GM12878 (cell line): ENCODE measurements at regions of chr12 and their contacts with region 1.

Region 1: DNA sequence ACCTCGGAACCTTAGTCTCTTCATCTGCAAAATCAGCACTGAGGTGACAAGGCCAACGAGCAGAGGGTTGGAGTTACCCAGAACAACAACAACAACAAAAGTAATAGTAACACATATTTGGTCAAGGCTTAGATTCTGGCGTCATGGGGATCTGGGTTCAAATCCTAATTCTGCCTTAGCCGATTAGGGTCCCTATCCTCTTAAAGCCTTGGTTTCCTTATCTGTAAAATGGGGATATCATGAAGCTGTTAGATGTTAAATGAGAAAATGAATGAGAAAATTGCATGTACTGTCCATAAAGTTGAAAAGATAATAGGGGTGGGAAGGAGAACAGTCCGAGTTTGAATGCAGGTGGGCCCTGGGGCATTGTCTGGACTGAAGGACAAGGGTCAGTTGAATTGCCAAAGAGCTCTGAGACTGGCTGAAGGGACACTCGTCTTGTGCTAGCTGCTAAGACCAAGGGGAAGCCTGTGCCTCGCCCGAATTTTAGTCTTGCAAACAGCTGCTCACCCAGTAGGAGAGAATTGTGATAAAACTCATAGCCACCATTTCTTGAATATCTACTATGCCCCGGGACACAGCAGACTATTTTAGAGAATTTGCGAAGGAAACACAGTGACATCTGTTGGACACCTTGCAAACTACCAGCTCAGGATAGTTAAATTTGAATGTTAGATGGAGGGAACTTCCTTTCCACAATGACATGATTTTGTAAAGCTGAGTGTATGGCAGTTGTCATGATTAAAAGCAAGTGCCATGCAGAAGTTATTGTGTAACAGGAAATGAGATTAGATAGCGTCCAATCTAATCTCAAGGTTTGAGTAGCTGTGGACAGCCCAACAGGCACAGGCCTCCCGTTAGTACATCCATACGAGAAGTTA is 6.8 kb upstream of the HNF1A start:
- DNase-seq: peak; percentile 57
- ATAC-seq: peak; percentile 95
- H3K4me3 ChIP-seq: no peak overlapping the region
- H3K27ac ChIP-seq: no peak overlapping the region
- H3K4me1 ChIP-seq: no peaks in the 10 kb centered on the region
- H3K27me3 ChIP-seq: no peaks in the 10 kb centered on the region
- CTCF ChIP-seq: peak; percentile 72 to 83 (median 79)
- EP300 ChIP-seq: no peak
- POLR2A ChIP-seq: no peak
- RAD21 ChIP-seq: peak; percentile 95

Region 2: GRCh38 chr12:120640840-120641833 is 330.4 kb before region 1 on chr12:
- CTCF ChIA-PET with region 1: interaction called, 73 read pairs
- POLR2A ChIA-PET with region 1: no interaction called
- RAD21 ChIA-PET with region 1: interaction called, 53 read pairs
- SMC1A ChIA-PET with region 1: interaction called, 67 read pairs
- in situ Hi-C with region 1: loop called (anchors 5 kb)
- intact Hi-C with region 1: no loop called
- DNase-seq: no peak
- ATAC-seq: peak; percentile 88
- H3K4me3 ChIP-seq: peak overlapping the region; percentile 32; the same call in 1 of the 2 replicates
- H3K27ac ChIP-seq: no peak overlapping the region
- H3K4me1 ChIP-seq: no peaks in the 10 kb centered on the region
- H3K27me3 ChIP-seq: peaks cover 6 to 8% of the 10 kb centered on the region in 2 experiments
- CTCF ChIP-seq: no peak
- EP300 ChIP-seq: no peak
- POLR2A ChIP-seq: no peak
- RAD21 ChIP-seq: no peak

Region 3: GRCh38 chr12:120720234-120720986 is 251.1 kb before region 1 on chr12:
- CTCF ChIA-PET with region 1: interaction called, 19 read pairs
- POLR2A ChIA-PET with region 1: no interaction called
- RAD21 ChIA-PET with region 1: interaction called, 5 read pairs
- SMC1A ChIA-PET with region 1: interaction called, 8 read pairs
- in situ Hi-C with region 1: no loop called
- intact Hi-C with region 1: no loop called
- DNase-seq: no peak
- ATAC-seq: no peak
- H3K4me3 ChIP-seq: no peak overlapping the region
- H3K27ac ChIP-seq: no peak overlapping the region
- H3K4me1 ChIP-seq: peaks cover 16% of the 10 kb centered on the region
- H3K27me3 ChIP-seq: no peaks in the 10 kb centered on the region
- CTCF ChIP-seq: no peak
- EP300 ChIP-seq: no peak
- POLR2A ChIP-seq: no peak
- RAD21 ChIP-seq: no peak

Region 4: DNA sequence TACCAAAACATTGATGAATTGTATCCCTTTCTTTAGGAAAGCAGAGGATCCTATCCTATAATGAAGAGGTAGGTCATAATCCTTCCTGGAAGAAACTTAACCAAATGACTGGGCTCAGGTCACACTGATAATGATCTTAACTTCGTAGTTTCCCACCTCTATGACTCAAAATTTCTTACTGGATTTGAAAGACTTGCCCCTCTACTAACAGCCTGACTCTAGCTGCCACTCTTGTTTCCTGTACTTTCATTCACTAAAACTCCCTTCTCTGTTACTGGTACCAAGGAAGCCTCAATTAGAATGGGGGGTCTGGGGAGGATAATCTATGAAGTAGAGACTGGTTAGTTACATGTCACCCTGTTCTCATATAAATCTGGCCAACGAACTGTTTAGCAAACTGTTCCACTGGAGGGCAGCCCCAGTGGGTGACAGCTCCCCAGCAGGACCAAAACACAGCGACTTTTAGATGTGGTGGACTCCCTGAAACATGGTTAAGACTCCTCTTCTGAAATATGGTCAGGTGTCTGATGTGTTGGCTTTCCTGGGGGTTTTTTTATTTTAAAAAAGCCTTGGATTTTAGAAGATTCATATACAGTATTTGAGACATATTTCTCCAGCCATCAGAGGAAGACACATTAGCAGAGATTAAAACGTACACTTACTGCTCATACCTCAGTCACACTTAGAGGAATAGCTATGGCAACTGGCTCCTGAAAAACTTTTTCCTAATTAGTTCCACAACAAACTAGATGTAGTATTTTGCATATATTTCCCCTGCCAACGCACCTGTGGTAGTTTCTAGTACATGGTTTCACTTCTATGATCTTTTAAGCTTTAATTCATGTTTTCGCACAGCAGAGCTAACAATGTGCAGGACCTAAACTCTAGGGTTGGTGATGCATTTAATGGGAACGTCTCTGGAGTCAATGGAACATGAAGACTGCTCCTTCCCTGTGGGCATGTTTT is 173.6 kb before region 1 on chr12:
- CTCF ChIA-PET with region 1: interaction called, 22 read pairs
- POLR2A ChIA-PET with region 1: interaction called, 5 read pairs
- RAD21 ChIA-PET with region 1: interaction called, 32 read pairs
- SMC1A ChIA-PET with region 1: interaction called, 18 read pairs
- in situ Hi-C with region 1: no loop called
- intact Hi-C with region 1: no loop called
- DNase-seq: peak; percentile 51
- ATAC-seq: peak; percentile 66
- H3K4me3 ChIP-seq: peak overlapping the region; percentile 35
- H3K27ac ChIP-seq: peak overlapping the region; percentile 76
- H3K4me1 ChIP-seq: peaks cover 46% of the 10 kb centered on the region
- H3K27me3 ChIP-seq: no peaks in the 10 kb centered on the region
- CTCF ChIP-seq: 0 out of 6 replicates have a peak, but pooled peaks of 2 of the 3 experiments have one; percentile 1 to 5
- EP300 ChIP-seq: no peak
- POLR2A ChIP-seq: no peak
- RAD21 ChIP-seq: peak; percentile 32; the same call in 1 of the 2 replicates

Region 5: GRCh38 chr12:120886199-120887018 is 85.1 kb before region 1 on chr12:
- CTCF ChIA-PET with region 1: interaction called, 9 read pairs
- POLR2A ChIA-PET with region 1: no interaction called
- RAD21 ChIA-PET with region 1: interaction called, 11 read pairs
- SMC1A ChIA-PET with region 1: interaction called, 6 read pairs
- in situ Hi-C with region 1: no loop called
- intact Hi-C with region 1: no loop called
- DNase-seq: peak; percentile 68
- ATAC-seq: peak; percentile 90
- H3K4me3 ChIP-seq: no peak overlapping the region
- H3K27ac ChIP-seq: peak overlapping the region; percentile 84
- H3K4me1 ChIP-seq: peaks cover 20% of the 10 kb centered on the region; the same call in 1 of the 2 replicates
- H3K27me3 ChIP-seq: no peaks in the 10 kb centered on the region
- CTCF ChIP-seq: no peak
- EP300 ChIP-seq: 0 out of 4 replicates have a peak, but pooled peaks of 1 of the 2 experiments have one; percentile 13
- POLR2A ChIP-seq: no peak
- RAD21 ChIP-seq: no peak

Region 6: GRCh38 chr12:120944645-120945231 is 26.8 kb before region 1 on chr12:
- CTCF ChIA-PET with region 1: interaction called, 18 read pairs
- POLR2A ChIA-PET with region 1: interaction called, 3 read pairs
- RAD21 ChIA-PET with region 1: interaction called, 14 read pairs
- SMC1A ChIA-PET with region 1: interaction called, 15 read pairs
- in situ Hi-C with region 1: no loop called
- intact Hi-C with region 1: no loop called
- DNase-seq: no peak
- ATAC-seq: peak; percentile 81
- H3K4me3 ChIP-seq: no peak overlapping the region
- H3K27ac ChIP-seq: no peak overlapping the region
- H3K4me1 ChIP-seq: no peaks in the 10 kb centered on the region
- H3K27me3 ChIP-seq: no peaks in the 10 kb centered on the region
- CTCF ChIP-seq: peak; percentile 47 to 74 (median 70)
- EP300 ChIP-seq: no peak
- POLR2A ChIP-seq: no peak
- RAD21 ChIP-seq: peak; percentile 48